ENCODE measurements at regions of chr4 and their contacts with region 1.

Region 1: DNA sequence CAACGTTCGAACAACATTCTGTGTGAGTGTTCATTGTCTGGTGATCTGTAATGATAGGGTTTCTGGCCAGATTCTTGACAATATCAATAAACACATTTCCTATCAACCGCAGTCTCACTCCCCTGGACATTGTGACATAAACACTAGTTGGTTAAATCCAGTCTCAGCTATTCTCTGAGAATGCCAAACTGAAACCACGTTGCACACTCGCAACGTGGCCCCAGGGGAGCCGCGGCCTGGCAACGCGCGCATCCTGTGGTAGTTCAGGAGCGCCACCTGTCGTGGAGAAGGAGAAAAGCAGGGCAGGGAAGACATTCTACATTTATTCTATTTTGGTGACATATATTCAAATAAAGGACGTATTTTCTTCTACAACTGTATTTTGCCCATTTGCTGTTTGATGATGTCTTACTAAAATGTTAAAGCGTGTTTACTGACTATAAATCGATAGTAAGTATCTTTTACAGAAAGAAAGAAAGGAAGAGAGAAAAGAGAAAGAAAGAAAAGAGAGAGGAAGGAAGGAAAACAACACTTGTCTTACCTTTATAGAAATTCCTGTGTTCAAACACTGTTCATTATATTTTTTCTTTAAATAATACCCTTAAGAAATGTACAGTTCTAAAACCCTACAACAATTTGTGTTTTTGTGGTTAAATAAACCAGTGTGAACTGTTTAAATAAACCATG is 738.3 kb upstream of the FRG1 start:
- DNase-seq: peak; percentile 92
- ATAC-seq: peak; percentile 94
- H3K4me3 ChIP-seq: peak overlapping the region; percentile 37; the same call in 1 of the 2 replicates
- H3K27ac ChIP-seq: peak overlapping the region; percentile 96
- H3K4me1 ChIP-seq: peaks cover 4% of the 10 kb centered on the region
- H3K27me3 ChIP-seq: no peaks in the 10 kb centered on the region
- CTCF ChIP-seq: peak; percentile 95
- POLR2A ChIP-seq: no peak
- RAD21 ChIP-seq: peak; percentile 90

Region 2: GRCh38 chr4:188270273-188271069 is 931.9 kb before region 1 on chr4:
- CTCF ChIA-PET with region 1: no interaction called
- POLR2A ChIA-PET with region 1: no interaction called
- dilution Hi-C with region 1: no loop called
- in situ Hi-C with region 1: no loop called
- intact Hi-C with region 1: loop called (anchors 10 kb)
- DNase-seq: no peak
- ATAC-seq: peak; percentile 60
- H3K4me3 ChIP-seq: no peak overlapping the region
- H3K27ac ChIP-seq: no peak overlapping the region
- H3K4me1 ChIP-seq: no peaks in the 10 kb centered on the region
- H3K27me3 ChIP-seq: no peaks in the 10 kb centered on the region; the same call in 1 of the 2 replicates
- CTCF ChIP-seq: no peak
- POLR2A ChIP-seq: no peak
- RAD21 ChIP-seq: no peak

Region 3: DNA sequence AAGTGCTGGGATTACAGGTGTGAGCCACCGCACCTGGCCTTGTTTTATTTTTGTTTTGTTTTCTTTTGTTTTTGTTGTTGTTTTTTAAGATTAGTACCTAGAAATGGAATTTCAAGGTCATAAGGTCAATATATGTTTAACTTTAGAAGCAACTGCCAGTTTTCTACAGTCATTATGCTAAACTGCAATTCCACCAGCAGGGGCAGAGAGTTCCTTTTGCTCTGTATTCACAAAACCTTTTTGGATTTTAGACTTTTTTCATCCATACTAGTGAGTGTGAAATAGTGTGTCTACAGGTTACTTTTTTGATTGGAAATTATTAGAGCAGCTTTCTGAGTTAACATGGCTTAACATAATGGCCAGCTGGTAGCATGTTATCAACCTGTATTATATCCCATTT is 482.5 kb before region 1 on chr4:
- CTCF ChIA-PET with region 1: no interaction called
- POLR2A ChIA-PET with region 1: no interaction called
- dilution Hi-C with region 1: no loop called
- in situ Hi-C with region 1: no loop called
- intact Hi-C with region 1: loop called (anchors 5 kb)
- DNase-seq: no peak
- ATAC-seq: no peak
- H3K4me3 ChIP-seq: no peak overlapping the region
- H3K27ac ChIP-seq: no peak overlapping the region
- H3K4me1 ChIP-seq: peaks cover 2% of the 10 kb centered on the region; the same call in 1 of the 2 replicates
- H3K27me3 ChIP-seq: no peaks in the 10 kb centered on the region
- CTCF ChIP-seq: peak; percentile 26; the same call in 1 of the 2 replicates
- POLR2A ChIP-seq: no peak
- RAD21 ChIP-seq: no peak

Region 4: GRCh38 chr4:188976644-188977115 is 225.6 kb before region 1 on chr4:
- CTCF ChIA-PET with region 1: no interaction called
- POLR2A ChIA-PET with region 1: no interaction called
- dilution Hi-C with region 1: no loop called
- in situ Hi-C with region 1: no loop called
- intact Hi-C with region 1: loop called (anchors 5 kb)
- DNase-seq: peak; percentile 70
- ATAC-seq: peak; percentile 77
- H3K4me3 ChIP-seq: no peak overlapping the region
- H3K27ac ChIP-seq: no peak overlapping the region; the same call in 1 of the 2 replicates
- H3K4me1 ChIP-seq: peaks cover 8% of the 10 kb centered on the region
- H3K27me3 ChIP-seq: no peaks in the 10 kb centered on the region
- CTCF ChIP-seq: no peak
- POLR2A ChIP-seq: no peak
- RAD21 ChIP-seq: no peak

Region 5: DNA sequence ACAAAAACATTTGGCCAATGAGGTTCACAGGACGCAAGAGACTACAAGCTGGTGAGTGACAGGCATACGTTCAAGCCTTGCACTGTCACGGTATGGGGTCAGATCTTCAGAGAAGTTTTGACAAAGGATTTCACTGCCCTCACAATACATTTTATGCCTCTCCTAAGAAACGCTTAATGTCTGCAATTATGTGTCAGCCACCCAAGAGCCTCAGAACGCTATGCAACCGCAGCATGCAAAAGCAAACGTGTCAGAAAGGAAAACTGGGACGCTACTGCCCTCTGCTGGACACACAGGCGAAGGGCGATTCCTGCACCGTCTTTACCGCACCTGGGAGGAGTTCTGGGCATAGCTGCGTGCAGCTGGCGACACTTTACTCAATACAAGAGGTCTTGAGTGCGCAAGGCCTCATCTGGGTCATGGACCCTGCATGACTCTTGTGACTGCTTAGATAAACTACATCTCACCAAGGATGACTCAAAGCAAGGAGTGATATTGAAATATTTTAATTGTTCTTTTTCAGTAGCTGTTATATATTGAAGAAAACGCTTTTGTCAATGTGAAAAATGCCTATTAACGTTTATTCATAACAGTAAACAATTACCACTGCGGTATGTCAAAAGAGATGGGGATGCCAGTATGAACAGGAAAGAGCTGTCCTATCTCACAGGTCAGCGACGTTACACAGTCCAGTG is 590.7 kb after region 1 on chr4:
- CTCF ChIA-PET with region 1: no interaction called
- POLR2A ChIA-PET with region 1: no interaction called
- dilution Hi-C with region 1: no loop called
- in situ Hi-C with region 1: no loop called
- intact Hi-C with region 1: loop called (anchors 2 kb)
- DNase-seq: peak; percentile 65
- ATAC-seq: peak; percentile 100
- H3K4me3 ChIP-seq: no peak overlapping the region
- H3K27ac ChIP-seq: no peak overlapping the region
- H3K4me1 ChIP-seq: no peaks in the 10 kb centered on the region
- H3K27me3 ChIP-seq: no peaks in the 10 kb centered on the region
- CTCF ChIP-seq: peak; percentile 76
- POLR2A ChIP-seq: no peak
- RAD21 ChIP-seq: peak; percentile 83